ENCODE measurements at regions of chr4 and their contacts with region 1.

Region 1: DNA sequence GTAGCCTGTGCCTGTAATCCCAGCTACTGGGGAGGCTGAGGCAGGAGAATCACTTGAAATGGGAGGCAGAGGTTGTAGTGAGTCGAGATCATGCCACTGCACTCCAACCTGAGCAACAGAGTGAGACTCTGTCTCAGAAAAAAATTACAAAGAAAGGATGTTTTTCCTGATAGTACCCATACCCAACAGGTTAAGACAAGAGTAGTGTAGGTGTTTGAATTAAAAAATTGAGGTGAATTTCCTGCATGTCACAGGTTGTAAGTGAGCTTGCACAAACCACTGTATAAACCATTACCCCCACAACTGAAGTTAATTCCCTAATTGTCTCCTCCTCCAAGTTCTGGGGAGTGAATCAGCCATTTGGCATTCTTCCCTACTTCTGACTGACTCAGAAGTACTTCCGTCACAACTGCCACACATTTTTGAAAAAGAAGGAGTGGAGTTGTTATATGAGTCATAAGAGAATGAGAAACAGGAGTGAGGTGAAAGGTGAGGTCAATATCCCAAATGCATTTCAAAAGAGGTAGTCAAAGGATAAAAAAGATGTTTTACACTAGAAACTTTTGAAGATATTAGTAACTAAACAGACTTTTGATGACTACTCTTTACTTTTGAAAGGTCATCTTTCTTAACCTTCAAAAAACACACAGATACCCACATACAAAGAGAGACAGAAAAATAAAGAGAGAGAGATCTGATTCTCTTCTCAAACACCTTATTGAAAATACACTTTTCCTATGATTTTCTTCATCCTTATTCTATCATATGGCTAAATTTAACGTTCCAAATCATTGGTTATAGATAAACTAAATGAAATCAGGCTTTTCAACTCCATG is 134.5 kb downstream of the BTC start:
- DNase-seq: peak; percentile 99
- ATAC-seq: peak; percentile 93
- H3K4me3 ChIP-seq: no peak overlapping the region
- H3K27ac ChIP-seq: peak overlapping the region; percentile 32; the same call in 1 of the 2 replicates
- H3K4me1 ChIP-seq: peaks cover 6% of the 10 kb centered on the region; the same call in 1 of the 2 replicates
- H3K27me3 ChIP-seq: no peaks in the 10 kb centered on the region
- CTCF ChIP-seq: no peak
- POLR2A ChIP-seq: no peak
- RAD21 ChIP-seq: no peak

Region 2: DNA sequence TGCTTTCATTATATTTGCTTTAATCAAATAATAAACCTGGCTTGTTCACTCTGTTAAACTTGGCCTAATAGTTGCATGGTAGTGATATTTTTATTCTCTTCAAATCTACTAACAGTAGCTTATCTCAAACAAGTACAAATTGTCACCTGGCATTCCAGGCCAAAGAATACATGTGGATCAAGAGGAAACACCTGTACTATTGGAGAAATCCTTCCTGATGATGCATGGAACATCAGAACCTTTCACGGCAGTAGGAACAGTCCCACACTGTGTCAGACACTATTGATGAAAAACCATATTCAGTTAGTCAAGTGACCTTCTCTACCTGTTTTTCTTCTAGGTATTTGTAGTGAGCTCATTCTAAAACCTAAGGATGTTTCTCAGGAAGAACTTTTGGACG is 484.9 kb before region 1 on chr4:
- CTCF ChIA-PET with region 1: no interaction called
- POLR2A ChIA-PET with region 1: no interaction called
- dilution Hi-C with region 1: no loop called
- in situ Hi-C with region 1: loop called (anchors 10 kb)
- intact Hi-C with region 1: no loop called
- DNase-seq: no peak
- ATAC-seq: no peak
- H3K4me3 ChIP-seq: no peak overlapping the region
- H3K27ac ChIP-seq: no peak overlapping the region
- H3K4me1 ChIP-seq: no peaks in the 10 kb centered on the region
- H3K27me3 ChIP-seq: no peaks in the 10 kb centered on the region
- CTCF ChIP-seq: no peak
- POLR2A ChIP-seq: no peak
- RAD21 ChIP-seq: no peak

Region 3: GRCh38 chr4:74613266-74613665 is 46.5 kb before region 1 on chr4:
- CTCF ChIA-PET with region 1: no interaction called
- POLR2A ChIA-PET with region 1: interaction called, 10 read pairs
- dilution Hi-C with region 1: no loop called
- in situ Hi-C with region 1: no loop called
- intact Hi-C with region 1: no loop called
- DNase-seq: no peak
- ATAC-seq: no peak
- H3K4me3 ChIP-seq: no peak overlapping the region
- H3K27ac ChIP-seq: no peak overlapping the region
- H3K4me1 ChIP-seq: no peaks in the 10 kb centered on the region
- H3K27me3 ChIP-seq: no peaks in the 10 kb centered on the region
- CTCF ChIP-seq: no peak
- POLR2A ChIP-seq: no peak
- RAD21 ChIP-seq: no peak

Region 4: DNA sequence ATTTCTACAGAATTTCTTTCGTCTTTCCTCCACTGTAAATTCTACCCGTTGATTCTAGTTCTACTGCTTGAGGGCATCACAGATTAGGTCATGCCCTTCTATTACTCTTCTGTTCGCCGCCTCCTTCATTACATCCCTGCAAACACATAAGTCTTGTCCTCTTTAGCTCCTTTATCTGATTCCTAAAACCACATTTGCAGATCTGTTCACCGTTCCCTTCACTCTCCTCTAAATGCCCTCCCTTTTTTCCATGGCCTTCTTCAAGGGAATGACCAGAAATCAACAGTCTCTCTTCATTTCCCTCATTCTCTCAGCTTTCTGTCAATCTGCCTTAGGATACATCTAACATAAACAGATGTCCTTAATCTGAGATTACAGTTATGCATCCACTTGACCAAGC is 91.5 kb after region 1 on chr4:
- CTCF ChIA-PET with region 1: no interaction called
- POLR2A ChIA-PET with region 1: no interaction called
- dilution Hi-C with region 1: no loop called
- in situ Hi-C with region 1: no loop called
- intact Hi-C with region 1: no loop called
- DNase-seq: no peak
- ATAC-seq: no peak
- H3K4me3 ChIP-seq: no peak overlapping the region
- H3K27ac ChIP-seq: no peak overlapping the region
- H3K4me1 ChIP-seq: no peaks in the 10 kb centered on the region
- H3K27me3 ChIP-seq: peaks cover 1% of the 10 kb centered on the region; the same call in 1 of the 2 replicates
- CTCF ChIP-seq: no peak
- POLR2A ChIP-seq: no peak
- RAD21 ChIP-seq: no peak

Measured in IMR-90 (cell line).